Natural killer cell (primary cell): ENCODE measurements at regions of chr14 and their contacts with region 1.

Region 1: GRCh38 chr14:61296719-61297502 is 15.8 kb upstream of the TMEM30B start:
- DNase-seq: peak in 1 of 2 donors; percentile 81
- ATAC-seq: peak; percentile 63 to 84 (median 80)
- H3K4me3 ChIP-seq: no peak overlapping the region
- H3K4me3 Mint-ChIP-seq: no peak overlapping the region
- H3K27ac ChIP-seq: no peak overlapping the region
- H3K27ac Mint-ChIP-seq: no peak overlapping the region
- H3K4me1 ChIP-seq: peaks cover 6% of the 10 kb centered on the region
- H3K4me1 Mint-ChIP-seq: peaks cover 17 to 29% of the 10 kb centered on the region in 2 donors
- H3K27me3 ChIP-seq: no peaks in the 10 kb centered on the region
- H3K27me3 Mint-ChIP-seq: no peaks in the 10 kb centered on the region
- CTCF ChIP-seq: peak; percentile 89

Region 2: DNA sequence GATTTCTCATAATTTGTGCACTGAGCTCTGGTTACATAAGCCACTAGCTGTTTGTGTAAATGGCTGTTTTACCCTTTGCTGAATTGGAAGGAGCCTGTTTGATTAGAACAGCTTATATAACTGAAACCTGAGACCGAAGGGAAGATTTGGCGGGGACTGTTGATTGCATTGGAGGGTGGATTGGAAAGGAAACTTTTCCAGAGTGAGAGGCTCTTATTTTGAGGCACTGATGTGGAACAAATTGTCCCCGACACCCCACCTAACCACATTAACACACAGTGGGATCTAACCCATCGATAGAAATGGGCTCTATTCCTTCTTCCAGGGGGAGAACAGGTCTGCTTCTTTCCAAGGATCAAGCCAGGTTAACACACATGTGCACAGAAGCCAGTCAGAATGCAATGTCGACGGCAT is 67.4 kb before region 1 on chr14:
- intact Hi-C with region 1: no loop called
- DNase-seq: no peak
- ATAC-seq: no peak
- H3K4me3 ChIP-seq: no peak overlapping the region
- H3K4me3 Mint-ChIP-seq: no peak overlapping the region
- H3K27ac ChIP-seq: no peak overlapping the region
- H3K27ac Mint-ChIP-seq: no peak overlapping the region
- H3K4me1 ChIP-seq: no peaks in the 10 kb centered on the region
- H3K4me1 Mint-ChIP-seq: no peaks in the 10 kb centered on the region
- H3K27me3 ChIP-seq: no peaks in the 10 kb centered on the region
- H3K27me3 Mint-ChIP-seq: peaks cover 32 to 34% of the 10 kb centered on the region in 2 donors
- CTCF ChIP-seq: no peak

Region 3: GRCh38 chr14:61452452-61452851 is 155.5 kb after region 1 on chr14:
- intact Hi-C with region 1: loop called (anchors 5 kb)
- DNase-seq: peak; percentile 44 to 78
- ATAC-seq: peak; percentile 77 to 90 (median 84)
- H3K4me3 ChIP-seq: no peak overlapping the region
- H3K4me3 Mint-ChIP-seq: peak overlapping the region; percentile 86
- H3K27ac ChIP-seq: peak overlapping the region; percentile 82
- H3K27ac Mint-ChIP-seq: peak overlapping the region in 1 of 2 donors; percentile 93
- H3K4me1 ChIP-seq: peaks cover 67% of the 10 kb centered on the region
- H3K4me1 Mint-ChIP-seq: peaks cover 97% of the 10 kb centered on the region in 2 donors
- H3K27me3 ChIP-seq: no peaks in the 10 kb centered on the region
- H3K27me3 Mint-ChIP-seq: no peaks in the 10 kb centered on the region
- CTCF ChIP-seq: no peak